Gastrocnemius medialis (tissue), 4 donors: ENCODE measurements at regions of chr22 and their contacts with region 1.

Region 1: GRCh38 chr22:24592851-24593558 is at the start of gene LRRC75B:
- DNase-seq: peak; percentile 55 to 71
- ATAC-seq: peak; percentile 56 to 84
- H3K4me3 ChIP-seq: peak within 1 kb of the TSS; percentile 56 to 75 (median 62)
- H3K27ac ChIP-seq: peak within 1 kb of the TSS; percentile 54 to 64 (median 64)
- H3K4me1 ChIP-seq: no peaks in the 10 kb centered on the region
- H3K27me3 ChIP-seq: no peaks in the 10 kb centered on the region
- CTCF ChIP-seq: no peak
- POLR2A ChIP-seq: peak in 1 of 2 donors; percentile 37
- total RNA-seq, gene LRRC75B: 1.9 to 3.4 (median 2.8) TPM

Region 2: DNA sequence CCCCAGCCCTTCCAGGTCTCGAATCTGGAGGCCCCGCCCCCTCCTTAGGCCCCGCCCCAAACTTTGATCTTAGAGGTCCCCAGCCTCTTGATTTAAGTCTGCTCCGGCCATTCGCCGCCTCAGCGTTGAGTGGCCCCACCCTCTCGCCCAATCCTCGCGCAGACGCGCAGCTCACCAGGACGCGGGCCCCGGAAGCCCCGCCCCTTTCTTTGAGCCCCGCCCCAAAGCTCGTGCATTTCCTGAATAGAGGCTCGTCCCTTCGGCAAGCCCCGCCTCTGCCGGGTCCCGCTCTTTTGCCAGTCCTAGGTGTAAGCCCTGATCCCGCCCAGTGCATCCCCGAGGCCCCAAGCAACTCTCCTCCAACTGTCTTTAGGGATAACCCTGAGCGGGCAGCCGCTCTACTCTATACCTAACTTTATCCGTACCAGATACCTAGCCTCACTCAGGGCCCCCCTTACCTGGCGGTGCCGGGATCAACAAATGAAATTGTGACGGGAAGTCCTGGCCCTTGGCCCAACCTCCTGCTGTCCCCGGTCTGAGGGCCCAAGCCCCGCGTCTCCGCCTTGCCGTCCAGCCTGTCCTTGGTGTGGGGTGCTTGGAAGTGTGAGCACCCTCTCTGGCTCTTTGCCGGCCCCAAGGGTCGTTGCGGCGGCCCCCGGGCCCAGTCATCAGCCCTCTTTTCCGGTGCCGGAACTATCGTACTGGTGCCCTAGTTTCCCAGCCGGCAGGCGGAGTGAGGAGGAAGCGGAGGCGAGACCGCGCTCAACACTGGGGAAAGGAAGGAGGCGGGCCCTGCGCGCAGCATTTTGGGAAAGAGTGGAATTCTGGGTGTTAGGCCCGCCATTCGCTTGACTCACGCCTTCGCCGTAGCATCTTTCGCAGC is 37.6 kb before region 1 on chr22 and contains the start of gene SNRPD3:
- in situ Hi-C with region 1: no loop called
- intact Hi-C with region 1: loop called (anchors 1 kb)
- DNase-seq: peak; percentile 100
- ATAC-seq: peak; percentile 76 to 79
- H3K4me3 ChIP-seq: peak within 1 kb of the TSS; percentile 88 to 97 (median 96)
- H3K27ac ChIP-seq: peak within 1 kb of the TSS; percentile 96 to 99 (median 99)
- H3K4me1 ChIP-seq: peaks cover 65 to 79% of the 10 kb centered on the region in 2 donors
- H3K27me3 ChIP-seq: no peaks in the 10 kb centered on the region
- CTCF ChIP-seq: peak in 4 of 5 experiments; percentile 32 to 44 (median 38)
- POLR2A ChIP-seq: peak; percentile 67 to 74
- total RNA-seq, gene SNRPD3: 119 to 166 (median 145) TPM

Region 3: GRCh38 chr22:25777870-25778269 is 1184.9 kb after region 1 on chr22:
- in situ Hi-C with region 1: no loop called
- intact Hi-C with region 1: no loop called
- DNase-seq: no peak
- ATAC-seq: peak; percentile 19 to 25
- H3K4me3 ChIP-seq: no peak overlapping the region
- H3K27ac ChIP-seq: peak overlapping the region in 1 of 4 donors; percentile 28
- H3K4me1 ChIP-seq: no peaks in the 10 kb centered on the region
- H3K27me3 ChIP-seq: no peaks in the 10 kb centered on the region
- CTCF ChIP-seq: peak in 1 of 5 experiments; percentile 3
- POLR2A ChIP-seq: no peak